H1 (cell line): ENCODE measurements at regions of chr16 and their contacts with region 1.

Region 1: DNA sequence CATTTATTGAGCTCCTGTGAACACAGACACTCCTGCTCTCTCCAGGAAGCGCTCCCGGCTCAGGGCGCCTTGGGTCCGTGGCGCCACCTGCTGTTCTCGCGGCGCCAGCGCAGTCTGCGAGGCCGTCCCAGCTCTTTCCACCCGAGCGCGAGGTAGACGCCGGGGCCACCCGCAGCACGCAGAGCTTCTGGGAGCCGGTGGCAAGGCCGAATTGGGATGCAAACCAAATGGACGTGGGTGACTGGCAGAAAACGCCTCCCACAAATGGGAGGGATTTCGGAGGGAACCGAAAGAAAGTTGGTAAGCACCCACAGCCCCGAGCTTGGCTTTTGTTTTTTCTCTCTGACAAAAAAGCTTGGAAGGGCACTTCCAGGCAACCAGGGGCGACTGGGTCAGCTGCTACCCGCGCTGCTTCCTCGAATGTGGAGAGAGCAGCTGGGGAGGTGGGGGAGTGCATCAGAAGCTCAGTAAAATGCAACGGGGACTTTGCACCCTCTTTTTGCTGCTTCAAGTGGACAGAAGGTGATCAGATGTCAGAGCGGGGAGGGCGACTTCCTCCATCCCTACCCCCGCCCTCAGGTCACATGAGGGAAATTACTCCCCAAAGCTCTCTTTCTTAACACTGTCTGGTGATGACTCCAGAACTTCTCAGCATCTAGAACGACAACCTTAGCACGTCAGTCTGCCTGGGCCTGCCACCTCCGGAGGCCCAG is 13.5 kb upstream of the N4BP1 start:
- DNase-seq: peak; percentile 59 to 92
- H3K4me3 ChIP-seq: peak overlapping the region; percentile 20 to 62 (median 58); a peak in 7 of 8 replicates
- H3K27ac ChIP-seq: no peak overlapping the region
- H3K4me1 ChIP-seq: peaks cover 0 to 2% (median 0%) of the 10 kb centered on the region in 4 experiments; a peak in 2 of 7 replicates
- H3K27me3 ChIP-seq: no peaks in the 10 kb centered on the region; a peak in 1 of 7 replicates
- CTCF ChIP-seq: peak; percentile 91 to 94 (median 92)
- EP300 ChIP-seq: no peak
- POLR2A ChIP-seq: no peak
- RAD21 ChIP-seq: peak; percentile 88 to 94

Region 2: GRCh38 chr16:48542020-48542473 is 81.4 kb before region 1 on chr16:
- CTCF ChIA-PET with region 1: interaction called, 39 read pairs
- POLR2A ChIA-PET with region 1: interaction called, 4 read pairs
- DNase-seq: no peak
- H3K4me3 ChIP-seq: no peak overlapping the region
- H3K27ac ChIP-seq: no peak overlapping the region
- H3K4me1 ChIP-seq: no peaks in the 10 kb centered on the region; a peak in 1 of 7 replicates
- H3K27me3 ChIP-seq: no peaks in the 10 kb centered on the region
- CTCF ChIP-seq: peak; percentile 46 to 62 (median 51)
- EP300 ChIP-seq: no peak
- POLR2A ChIP-seq: no peak
- RAD21 ChIP-seq: peak; percentile 67 to 77

Region 3: DNA sequence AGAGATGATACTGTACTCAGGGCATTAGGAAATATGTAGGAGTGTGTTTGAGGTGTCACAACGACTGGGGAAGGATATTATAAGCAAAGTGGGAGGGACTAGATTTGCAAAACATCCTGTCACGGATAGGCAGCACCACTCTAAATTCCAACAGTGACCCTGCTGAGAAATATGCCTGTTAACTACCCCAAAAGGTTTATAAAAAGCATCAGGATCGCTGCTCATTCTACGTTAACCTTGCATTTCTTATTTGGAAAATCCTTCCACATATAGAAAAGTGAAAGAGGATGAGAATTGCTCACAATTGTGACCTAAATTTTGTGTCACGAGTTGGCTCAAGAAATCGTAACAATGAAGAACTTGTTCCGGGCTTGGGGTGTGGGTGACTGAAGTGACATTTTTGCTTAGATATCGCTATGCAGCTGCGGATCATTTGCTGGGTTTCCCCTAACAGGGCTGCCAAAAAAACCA is 65.1 kb before region 1 on chr16:
- CTCF ChIA-PET with region 1: interaction called, 10 read pairs
- POLR2A ChIA-PET with region 1: no interaction called
- DNase-seq: no peak
- H3K4me3 ChIP-seq: no peak overlapping the region
- H3K27ac ChIP-seq: no peak overlapping the region
- H3K4me1 ChIP-seq: peaks cover 3 to 9% (median 4%) of the 10 kb centered on the region in 4 experiments; a peak in 6 of 7 replicates
- H3K27me3 ChIP-seq: no peaks in the 10 kb centered on the region
- CTCF ChIP-seq: no peak
- EP300 ChIP-seq: no peak
- POLR2A ChIP-seq: no peak
- RAD21 ChIP-seq: no peak

Region 4: GRCh38 chr16:48613041-48613957 is 10.2 kb before region 1 on chr16:
- CTCF ChIA-PET with region 1: interaction called, 15 read pairs
- POLR2A ChIA-PET with region 1: interaction called, 5 read pairs
- DNase-seq: no peak
- H3K4me3 ChIP-seq: no peak overlapping the region; a peak in 1 of 8 replicates
- H3K27ac ChIP-seq: no peak overlapping the region; the same call in 1 of the 2 replicates
- H3K4me1 ChIP-seq: peaks cover 4 to 10% (median 8%) of the 10 kb centered on the region in 4 experiments; a peak in 5 of 7 replicates
- H3K27me3 ChIP-seq: no peaks in the 10 kb centered on the region
- CTCF ChIP-seq: no peak
- EP300 ChIP-seq: no peak
- POLR2A ChIP-seq: no peak
- RAD21 ChIP-seq: no peak

Region 5: GRCh38 chr16:48659940-48660339 is 36.5 kb after region 1 on chr16:
- CTCF ChIA-PET with region 1: no interaction called
- POLR2A ChIA-PET with region 1: no interaction called
- DNase-seq: no peak
- H3K4me3 ChIP-seq: no peak overlapping the region
- H3K27ac ChIP-seq: no peak overlapping the region
- H3K4me1 ChIP-seq: no peaks in the 10 kb centered on the region
- H3K27me3 ChIP-seq: no peaks in the 10 kb centered on the region
- CTCF ChIP-seq: no peak
- EP300 ChIP-seq: no peak
- POLR2A ChIP-seq: no peak
- RAD21 ChIP-seq: no peak